Activated naive CD4-positive, alpha-beta T cell treated with anti-CD3 and anti-CD28 coated beads, Interleukin-2, amount 10 ng/mL, durations not matched to agents 7 days and 5 days (primary cell): ENCODE measurements at regions of chr11 and their contacts with region 1.

Region 1: GRCh38 chr11:61129639-61130523 is 27.6 kb downstream of the CD5 start:
- DNase-seq: peak; percentile 94
- H3K4me3 Mint-ChIP-seq: no peak overlapping the region
- H3K27ac Mint-ChIP-seq: peak overlapping the region; percentile 51
- H3K4me1 Mint-ChIP-seq: peaks cover 22% of the 10 kb centered on the region
- H3K27me3 Mint-ChIP-seq: no peaks in the 10 kb centered on the region

Region 2: GRCh38 chr11:60970369-60970774 is 159.5 kb before region 1 on chr11:
- CTCF ChIA-PET with region 1: interaction called, 39 read pairs
- DNase-seq: peak; percentile 88
- H3K4me3 Mint-ChIP-seq: peak overlapping the region; percentile 42
- H3K27ac Mint-ChIP-seq: peak overlapping the region; percentile 76
- H3K4me1 Mint-ChIP-seq: peaks cover 22% of the 10 kb centered on the region
- H3K27me3 Mint-ChIP-seq: peaks cover 13% of the 10 kb centered on the region

Region 3: DNA sequence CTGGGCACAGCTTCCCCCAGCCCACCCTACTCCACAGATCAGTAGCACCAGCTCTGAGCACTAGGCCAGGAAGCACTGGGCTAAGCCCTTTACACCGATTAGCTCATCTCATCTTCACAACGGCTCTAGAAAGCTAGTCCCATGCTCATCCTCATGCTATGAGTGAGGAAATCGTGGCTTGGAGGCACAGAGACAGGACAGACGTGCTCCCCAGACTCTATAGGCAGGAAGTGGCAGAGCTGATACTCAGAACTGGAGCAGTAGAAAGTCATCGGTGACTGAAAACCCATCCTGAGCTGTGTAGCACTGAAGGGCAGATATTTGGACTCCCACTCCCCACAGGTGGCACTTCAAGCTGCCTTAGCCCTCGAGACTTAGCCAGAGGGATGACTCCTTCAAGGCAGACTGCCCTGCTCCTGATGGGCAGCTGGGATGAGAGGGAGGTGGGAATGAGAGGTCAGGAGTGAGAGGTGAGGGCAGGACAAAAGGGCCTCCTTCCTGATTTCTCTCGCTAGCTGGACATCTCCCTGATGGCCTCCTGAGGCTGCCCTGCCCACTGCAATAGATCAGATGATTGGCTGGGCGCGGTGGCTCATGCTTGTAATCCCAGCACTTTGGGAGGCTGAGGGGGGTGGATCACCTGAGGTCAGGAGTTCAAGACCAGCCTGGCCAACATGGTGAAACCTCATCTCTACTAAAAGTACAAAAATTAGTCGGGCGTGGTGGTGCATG is 17.9 kb before region 1 on chr11:
- CTCF ChIA-PET with region 1: interaction called, 29 read pairs
- DNase-seq: peak; percentile 82
- H3K4me3 Mint-ChIP-seq: peak overlapping the region; percentile 76
- H3K27ac Mint-ChIP-seq: peak overlapping the region; percentile 88
- H3K4me1 Mint-ChIP-seq: peaks cover 99% of the 10 kb centered on the region
- H3K27me3 Mint-ChIP-seq: no peaks in the 10 kb centered on the region

Region 4: DNA sequence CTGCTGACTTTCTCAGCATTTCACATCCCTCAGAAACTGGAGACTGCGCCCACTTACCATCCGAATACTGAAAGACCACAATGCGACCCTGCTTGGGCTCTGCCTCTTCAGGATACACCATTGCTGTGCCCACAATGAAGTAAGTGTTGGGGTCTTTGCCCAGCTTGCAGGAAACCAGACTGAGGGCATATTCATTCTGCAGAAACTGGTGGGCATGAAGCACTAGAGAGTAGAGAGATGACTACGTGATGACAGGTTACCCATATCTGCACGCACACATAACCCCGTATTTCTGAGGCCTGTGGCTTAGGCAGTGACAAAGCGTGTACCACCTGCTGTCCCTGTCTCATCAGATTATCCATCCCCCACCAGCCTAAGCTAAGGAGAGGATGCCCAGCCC is 179.9 kb after region 1 on chr11:
- CTCF ChIA-PET with region 1: no interaction called
- DNase-seq: no peak
- H3K4me3 Mint-ChIP-seq: no peak overlapping the region
- H3K27ac Mint-ChIP-seq: no peak overlapping the region
- H3K4me1 Mint-ChIP-seq: no peaks in the 10 kb centered on the region
- H3K27me3 Mint-ChIP-seq: no peaks in the 10 kb centered on the region

Region 5: DNA sequence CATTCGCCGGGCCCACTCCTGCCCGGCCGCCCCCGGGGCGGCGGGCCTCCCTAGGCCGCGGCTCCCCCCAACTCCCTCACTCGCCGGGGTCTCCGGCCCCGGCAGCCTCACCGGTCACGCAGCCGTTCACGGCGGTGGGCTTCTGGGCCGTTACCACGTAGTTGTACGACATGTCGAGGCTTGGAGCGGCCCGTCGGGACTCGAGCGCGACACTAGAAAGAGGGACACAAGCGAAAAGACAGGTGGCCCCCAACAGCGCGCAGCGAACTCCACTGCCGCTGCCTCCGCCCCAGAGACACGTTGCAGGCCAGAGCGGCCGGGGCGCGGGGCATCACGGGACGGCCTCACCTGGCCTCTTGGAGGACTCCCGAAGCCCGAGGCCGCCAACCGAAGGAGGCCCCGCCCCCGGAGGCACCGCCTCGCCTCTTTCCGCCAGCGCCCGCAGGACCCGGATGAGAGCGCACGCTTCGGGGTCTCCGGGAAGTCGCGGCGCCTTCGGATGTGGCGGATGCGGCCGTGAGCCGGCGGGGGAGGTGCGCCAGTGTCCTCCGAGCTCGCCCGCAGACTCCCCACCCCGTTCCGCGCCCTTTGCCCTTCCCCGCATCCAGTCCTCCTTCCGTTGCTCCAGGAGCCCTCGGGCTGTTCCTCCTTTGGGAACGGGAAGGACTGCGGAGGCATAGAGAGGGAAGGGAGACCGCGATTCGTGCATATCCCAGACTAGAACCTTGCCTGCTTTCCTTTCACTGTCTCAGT is 203.1 kb after region 1 on chr11 and contains the starts of genes DDB1 and TKFC:
- CTCF ChIA-PET with region 1: no interaction called
- DNase-seq: peak; percentile 98
- H3K4me3 Mint-ChIP-seq: peak within 1 kb of the TSS; percentile 93
- H3K27ac Mint-ChIP-seq: peak within 1 kb of the TSS; percentile 97
- H3K4me1 Mint-ChIP-seq: peaks cover 72% of the 10 kb centered on the region
- H3K27me3 Mint-ChIP-seq: no peaks in the 10 kb centered on the region